IMR-90 (cell line): ENCODE measurements at regions of chr5 and their contacts with region 1.

Region 1: GRCh38 chr5:163193886-163194285 is 243.5 kb upstream of the CCNG1 start:
- DNase-seq: no peak
- ATAC-seq: no peak
- H3K4me3 ChIP-seq: no peak overlapping the region
- H3K27ac ChIP-seq: no peak overlapping the region
- H3K4me1 ChIP-seq: no peaks in the 10 kb centered on the region
- H3K27me3 ChIP-seq: no peaks in the 10 kb centered on the region
- CTCF ChIP-seq: no peak
- POLR2A ChIP-seq: no peak
- RAD21 ChIP-seq: no peak

Region 2: DNA sequence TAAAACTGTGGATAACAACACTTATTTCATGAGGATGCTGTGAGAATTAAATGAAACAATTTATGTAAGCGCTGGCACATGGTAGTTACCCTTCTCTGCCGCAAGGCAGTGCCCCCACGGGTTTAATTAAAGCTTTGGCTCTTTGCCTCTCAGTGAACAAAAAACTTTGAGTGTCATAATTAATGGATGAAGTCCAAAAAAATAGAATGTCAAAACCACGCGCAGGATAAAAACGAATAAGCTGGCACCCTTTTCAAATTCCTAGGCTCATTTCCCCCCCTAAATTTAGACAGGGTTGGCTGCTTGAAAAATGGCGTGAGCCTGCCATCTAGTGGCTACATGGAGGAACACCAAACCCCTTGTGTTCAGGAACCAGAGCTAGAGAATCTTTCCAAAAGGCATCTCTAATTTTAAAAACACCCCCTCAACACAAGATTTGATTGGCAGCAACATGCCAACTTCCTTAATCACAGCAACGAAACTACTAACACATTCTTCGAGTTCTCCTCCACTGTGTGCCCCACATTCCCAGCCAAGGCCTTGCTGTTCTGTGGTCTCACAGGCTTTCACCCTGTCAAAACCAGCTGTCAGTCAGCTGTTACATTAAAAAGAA is 214.5 kb after region 1 on chr5:
- CTCF ChIA-PET with region 1: no interaction called
- POLR2A ChIA-PET with region 1: interaction called, 15 read pairs
- dilution Hi-C with region 1: no loop called
- in situ Hi-C with region 1: no loop called
- intact Hi-C with region 1: no loop called
- DNase-seq: peak; percentile 53
- ATAC-seq: peak; percentile 92
- H3K4me3 ChIP-seq: no peak overlapping the region
- H3K27ac ChIP-seq: no peak overlapping the region
- H3K4me1 ChIP-seq: no peaks in the 10 kb centered on the region
- H3K27me3 ChIP-seq: peaks cover 1% of the 10 kb centered on the region; the same call in 1 of the 2 replicates
- CTCF ChIP-seq: peak; percentile 86
- POLR2A ChIP-seq: no peak
- RAD21 ChIP-seq: peak; percentile 82